ENCODE measurements at regions of chr19 and their contacts with region 1.

Region 1: DNA sequence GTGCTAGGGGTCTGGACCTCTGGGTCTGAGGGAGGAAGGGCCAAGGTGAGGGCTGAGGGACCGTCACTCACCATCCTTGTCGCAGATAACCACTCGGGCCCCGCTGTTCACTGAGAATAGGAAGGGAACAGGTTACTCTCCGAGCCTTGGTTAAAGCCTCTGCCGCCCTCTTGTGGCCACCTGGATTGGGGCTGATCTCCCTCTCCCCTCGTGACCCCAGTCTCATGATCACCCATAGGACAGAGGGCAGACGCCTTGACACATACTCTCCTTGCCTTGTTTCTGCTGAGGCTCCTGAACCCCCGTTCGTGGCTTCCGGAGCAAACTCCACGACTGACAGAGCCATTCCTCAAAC is 580 bp downstream of the HSD17B14 start:
- DNase-seq: peak; percentile 94
- ATAC-seq: peak; percentile 87 to 88
- H3K4me3 ChIP-seq: peak overlapping the region; percentile 49
- H3K27ac ChIP-seq: peak overlapping the region; percentile 80 to 90
- H3K4me1 ChIP-seq: peaks cover 7% of the 10 kb centered on the region; the same call in 2 of the 3 replicates
- CTCF ChIP-seq: peak; percentile 98
- EP300 ChIP-seq: no peak
- POLR2A ChIP-seq: no peak
- RAD21 ChIP-seq: peak; percentile 97 to 98

Region 2: DNA sequence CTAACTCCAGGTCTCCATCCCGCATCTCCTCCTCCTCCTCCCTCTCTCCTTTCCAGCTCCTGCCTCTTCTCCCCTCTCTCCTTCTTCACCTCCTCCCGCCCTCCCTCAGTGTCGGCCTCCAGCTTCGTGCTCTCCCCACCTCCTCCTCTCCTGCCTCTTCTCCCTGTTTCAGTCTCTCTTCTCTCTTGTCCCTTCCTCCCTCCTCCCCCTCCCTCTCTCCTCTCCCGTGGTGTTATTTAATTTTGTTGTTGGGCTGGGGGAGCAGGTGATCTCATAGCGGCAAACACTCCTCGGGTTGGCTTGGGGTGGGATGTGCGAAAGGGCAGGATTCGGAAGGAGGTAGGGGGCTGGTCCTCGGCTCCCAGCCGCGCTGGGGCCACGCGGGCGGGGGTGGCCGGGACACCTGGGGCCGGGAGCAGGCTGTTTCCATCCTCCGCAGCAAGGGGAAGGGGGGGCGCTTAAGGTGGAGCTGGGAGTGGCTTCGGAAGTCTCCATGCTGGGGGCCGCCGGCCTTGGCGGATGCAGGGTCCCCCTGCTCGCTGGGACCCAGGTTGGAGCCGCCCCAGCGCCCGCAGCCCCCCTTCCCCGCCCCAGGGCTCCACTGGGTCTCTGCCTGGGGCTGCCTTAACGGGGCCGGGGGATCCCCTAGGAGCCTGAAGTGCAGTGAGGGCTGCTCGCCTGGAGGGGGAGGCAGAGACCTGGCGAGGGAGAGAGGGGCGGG is 189.6 kb before region 1 on chr19 and contains the start of gene CA11:
- CTCF ChIA-PET with region 1: interaction called, 31 read pairs
- POLR2A ChIA-PET with region 1: interaction called, 3 read pairs
- DNase-seq: peak; percentile 91 to 97
- ATAC-seq: peak; percentile 85 to 90
- H3K4me3 ChIP-seq: peak within 1 kb of the TSS; percentile 54
- H3K27ac ChIP-seq: peak within 1 kb of the TSS; percentile 87 to 88
- H3K4me1 ChIP-seq: peaks cover 18% of the 10 kb centered on the region; the same call in 2 of the 3 replicates
- CTCF ChIP-seq: peak; percentile 90
- EP300 ChIP-seq: no peak
- POLR2A ChIP-seq: no peak; the same call in 1 of the 2 replicates
- RAD21 ChIP-seq: peak; percentile 97 to 98
- polyA plus RNA-seq, gene CA11: 8.8 and 9.8 TPM in 2 replicates

Region 3: GRCh38 chr19:48806518-48806817 is 29.2 kb before region 1 on chr19:
- CTCF ChIA-PET with region 1: interaction called, 40 read pairs
- POLR2A ChIA-PET with region 1: interaction called, 7 read pairs
- DNase-seq: peak in 1 of 2 experiments; percentile 76
- ATAC-seq: peak in 1 of 2 experiments; percentile 5; a peak in 1 of 6 replicates
- H3K4me3 ChIP-seq: no peak overlapping the region
- H3K27ac ChIP-seq: no peak overlapping the region
- H3K4me1 ChIP-seq: peaks cover 3% of the 10 kb centered on the region
- CTCF ChIP-seq: no peak
- EP300 ChIP-seq: no peak
- POLR2A ChIP-seq: no peak
- RAD21 ChIP-seq: no peak

Region 4: GRCh38 chr19:48812094-48812929 is 23.4 kb before region 1 on chr19:
- CTCF ChIA-PET with region 1: interaction called, 34 read pairs
- POLR2A ChIA-PET with region 1: interaction called, 7 read pairs
- DNase-seq: peak; percentile 53 to 66
- ATAC-seq: peak; percentile 7 to 31; a peak in 3 of 6 replicates
- H3K4me3 ChIP-seq: peak overlapping the region; percentile 59; the same call in 2 of the 3 replicates
- H3K27ac ChIP-seq: peak overlapping the region in 1 of 2 experiments; percentile 87; a peak in 2 of 6 replicates
- H3K4me1 ChIP-seq: peaks cover 27% of the 10 kb centered on the region
- CTCF ChIP-seq: no peak
- EP300 ChIP-seq: no peak
- POLR2A ChIP-seq: no peak
- RAD21 ChIP-seq: no peak

Region 5: DNA sequence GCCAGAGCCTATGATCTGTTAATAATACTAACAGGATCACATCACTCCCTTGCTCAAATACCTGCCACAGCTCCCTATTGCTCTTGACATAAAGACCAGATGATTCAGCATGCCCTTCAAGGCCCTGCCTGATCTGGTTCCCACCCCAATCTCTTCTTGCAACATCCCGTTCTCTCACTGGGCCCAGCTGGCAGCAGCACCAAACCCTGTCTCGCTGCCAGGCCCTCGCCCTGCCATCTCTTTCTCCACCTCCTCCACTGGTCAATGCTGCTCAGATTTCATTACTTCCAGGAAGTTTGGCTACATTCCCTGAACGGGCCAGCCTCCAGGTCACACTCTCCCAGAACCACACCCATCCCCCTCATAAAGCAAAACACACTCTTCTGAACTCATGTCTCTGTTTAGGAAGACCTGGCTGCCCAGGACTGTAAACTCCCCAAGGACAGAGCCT is 16.3 kb before region 1 on chr19:
- CTCF ChIA-PET with region 1: interaction called, 70 read pairs
- POLR2A ChIA-PET with region 1: interaction called, 3 read pairs
- DNase-seq: peak in 1 of 2 experiments; percentile 89
- ATAC-seq: peak; percentile 77 to 86
- H3K4me3 ChIP-seq: no peak overlapping the region
- H3K27ac ChIP-seq: peak overlapping the region; percentile 52 to 78; a peak in 5 of 6 replicates
- H3K4me1 ChIP-seq: peaks cover 33% of the 10 kb centered on the region
- CTCF ChIP-seq: no peak
- EP300 ChIP-seq: peak in 1 of 2 experiments; percentile 47; a peak in 1 of 5 replicates
- POLR2A ChIP-seq: no peak
- RAD21 ChIP-seq: no peak

Region 6: GRCh38 chr19:48852292-48852691 is 16.6 kb after region 1 on chr19:
- CTCF ChIA-PET with region 1: interaction called, 116 read pairs
- POLR2A ChIA-PET with region 1: no interaction called
- DNase-seq: no peak
- ATAC-seq: peak; percentile 48 to 63; a peak in 4 of 6 replicates
- H3K4me3 ChIP-seq: no peak overlapping the region
- H3K27ac ChIP-seq: no peak overlapping the region
- H3K4me1 ChIP-seq: no peaks in the 10 kb centered on the region
- CTCF ChIP-seq: no peak
- EP300 ChIP-seq: no peak
- POLR2A ChIP-seq: no peak
- RAD21 ChIP-seq: no peak